MCF 10A (cell line): ENCODE measurements at regions of chr14 and their contacts with region 1.

Region 1: GRCh38 chr14:85421186-85421877 is 108.6 kb upstream of the FLRT2 start:
- DNase-seq: peak; percentile 69
- H3K4me3 Mint-ChIP-seq: no peak overlapping the region
- H3K27ac Mint-ChIP-seq: peak overlapping the region; percentile 84
- H3K4me1 Mint-ChIP-seq: peaks cover 42% of the 10 kb centered on the region
- H3K27me3 Mint-ChIP-seq: no peaks in the 10 kb centered on the region
- CTCF ChIP-seq: no peak

Region 2: GRCh38 chr14:85358136-85358785 is 63.1 kb before region 1 on chr14:
- CTCF ChIA-PET with region 1: no interaction called
- POLR2A ChIA-PET with region 1: no interaction called
- intact Hi-C with region 1: no loop called
- DNase-seq: no peak
- H3K4me3 Mint-ChIP-seq: no peak overlapping the region
- H3K27ac Mint-ChIP-seq: no peak overlapping the region
- H3K4me1 Mint-ChIP-seq: no peaks in the 10 kb centered on the region
- H3K27me3 Mint-ChIP-seq: no peaks in the 10 kb centered on the region
- CTCF ChIP-seq: no peak

Region 3: GRCh38 chr14:85437148-85437547 is 15.8 kb after region 1 on chr14:
- CTCF ChIA-PET with region 1: interaction called, 3 read pairs
- POLR2A ChIA-PET with region 1: interaction called, 21 read pairs
- intact Hi-C with region 1: no loop called
- DNase-seq: peak; percentile 85
- H3K4me3 Mint-ChIP-seq: no peak overlapping the region
- H3K27ac Mint-ChIP-seq: peak overlapping the region; percentile 66
- H3K4me1 Mint-ChIP-seq: peaks cover 25% of the 10 kb centered on the region
- H3K27me3 Mint-ChIP-seq: no peaks in the 10 kb centered on the region
- CTCF ChIP-seq: no peak